GM13976 (cell line): ENCODE measurements at regions of chr6 and their contacts with region 1.

Region 1: DNA sequence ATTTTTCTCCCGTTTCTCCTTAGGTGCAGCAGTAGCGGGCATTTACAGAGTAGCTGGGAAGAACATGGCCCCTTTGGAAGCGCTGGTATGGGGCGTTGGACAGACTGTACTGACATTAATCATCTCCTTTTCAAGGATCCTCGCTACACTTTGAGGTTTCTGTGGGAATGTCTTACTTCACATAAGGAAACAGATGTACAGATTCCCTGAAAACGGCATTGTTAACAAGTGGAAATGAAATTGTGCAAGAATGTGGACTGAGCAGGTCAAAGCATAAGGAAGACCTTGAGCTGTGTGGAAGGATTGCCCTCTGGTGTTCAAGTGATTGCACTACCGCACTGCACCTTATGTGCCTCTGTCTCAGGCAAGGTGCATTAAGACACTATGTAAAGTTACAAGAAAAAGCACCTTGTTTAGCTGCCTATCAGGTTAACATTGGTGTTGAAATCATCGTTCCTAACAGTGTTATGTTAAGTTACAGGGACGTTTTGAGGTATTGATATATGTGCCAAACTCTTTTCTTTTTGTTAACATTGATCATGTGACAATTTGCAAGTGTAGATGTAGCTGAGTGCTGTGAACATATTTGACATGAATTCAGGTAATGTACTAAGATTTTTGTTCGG is 38.0 kb downstream of the TMEM170B start:
- DNase-seq: peak; percentile 46
- CTCF ChIP-seq: peak; percentile 82

Region 2: GRCh38 chr6:10954590-10955010 is 620.9 kb before region 1 on chr6:
- in situ Hi-C with region 1: loop called (anchors 10 kb)
- DNase-seq: peak; percentile 67
- CTCF ChIP-seq: peak; percentile 81

Region 3: GRCh38 chr6:11144393-11144851 is 431.1 kb before region 1 on chr6:
- in situ Hi-C with region 1: loop called (anchors 10 kb)
- DNase-seq: peak; percentile 82
- CTCF ChIP-seq: peak; percentile 94

Region 4: GRCh38 chr6:11496152-11497060 is 79.1 kb before region 1 on chr6:
- in situ Hi-C with region 1: loop called (anchors 5 kb)
- DNase-seq: peak; percentile 67
- CTCF ChIP-seq: peak; percentile 65

Region 5: DNA sequence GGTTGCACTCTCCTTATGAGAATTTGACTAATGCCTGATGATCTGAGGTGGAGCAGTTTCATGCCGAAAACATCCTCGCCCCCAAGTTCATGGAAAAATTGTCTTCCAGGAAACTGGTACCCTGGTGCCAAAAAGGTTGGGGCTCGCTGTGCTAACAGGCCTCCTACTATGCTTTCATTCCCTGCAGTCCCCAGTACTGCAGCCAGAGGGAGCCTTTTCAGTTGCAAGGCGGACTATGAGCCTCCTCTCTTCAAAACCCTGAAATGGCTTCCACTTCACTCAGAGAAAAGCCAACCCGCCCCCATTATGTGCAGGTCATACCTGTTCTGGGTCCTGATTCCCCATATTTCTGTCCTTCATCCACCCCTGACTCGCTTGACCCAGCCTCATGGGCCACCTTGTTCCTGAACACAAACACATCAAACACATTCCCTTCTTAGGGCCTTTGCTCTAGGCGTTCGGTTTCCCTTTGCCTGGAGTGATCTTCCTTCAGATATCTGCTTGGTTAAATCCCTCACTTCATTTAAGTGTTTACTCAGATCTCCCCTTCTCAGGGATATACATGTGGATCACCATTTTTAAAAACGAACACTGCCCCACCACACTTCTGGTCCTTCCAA is 1314.8 kb after region 1 on chr6:
- in situ Hi-C with region 1: loop called (anchors 25 kb)
- DNase-seq: no peak
- CTCF ChIP-seq: peak; percentile 20